ENCODE measurements at regions of chr2 and their contacts with region 1.

Region 1: DNA sequence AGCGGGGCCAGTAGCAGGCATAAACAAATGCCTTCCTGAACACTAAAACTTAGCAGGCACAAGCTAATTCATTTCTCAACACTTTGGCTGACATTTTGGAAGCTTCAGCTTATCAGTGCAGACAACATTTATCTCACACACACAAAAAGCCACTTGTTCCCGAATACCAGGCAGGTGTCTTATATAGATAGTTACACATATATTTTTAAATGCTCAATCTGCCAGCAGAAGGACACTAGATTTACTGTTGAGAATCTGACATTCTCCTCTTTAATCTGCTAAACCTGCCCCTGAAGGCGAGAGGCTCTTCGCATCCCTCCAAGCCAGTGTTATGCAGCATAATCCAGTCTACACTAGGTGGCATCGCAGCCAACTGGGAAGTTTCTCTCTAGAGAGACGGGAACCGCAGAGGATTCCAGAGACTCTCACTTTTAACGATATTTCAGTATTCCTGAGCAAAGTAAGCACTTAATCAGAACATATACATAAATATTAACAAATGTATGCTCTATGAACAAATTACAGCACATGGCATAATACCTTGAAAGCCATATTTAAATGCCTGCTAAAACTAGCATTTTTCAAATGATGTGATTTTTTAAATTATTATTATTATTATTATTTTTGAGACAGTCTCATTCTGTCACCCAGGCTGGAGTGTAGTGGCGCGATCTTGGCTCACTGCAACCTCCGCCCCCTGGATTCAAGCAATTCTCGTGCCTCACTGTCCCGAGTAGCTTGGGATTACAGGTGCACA is 90.2 kb upstream of the SCG2 start:
- DNase-seq: peak; percentile 67
- ATAC-seq: peak; percentile 92
- H3K4me3 ChIP-seq: no peak overlapping the region
- H3K27ac ChIP-seq: no peak overlapping the region
- H3K4me1 ChIP-seq: peaks cover 6% of the 10 kb centered on the region
- H3K27me3 ChIP-seq: no peaks in the 10 kb centered on the region
- CTCF ChIP-seq: peak; percentile 80
- POLR2A ChIP-seq: no peak
- RAD21 ChIP-seq: peak; percentile 81

Region 2: GRCh38 chr2:223860809-223861738 is 168.7 kb after region 1 on chr2:
- CTCF ChIA-PET with region 1: no interaction called
- POLR2A ChIA-PET with region 1: no interaction called
- dilution Hi-C with region 1: no loop called
- in situ Hi-C with region 1: no loop called
- intact Hi-C with region 1: loop called (anchors 5 kb)
- DNase-seq: peak; percentile 77
- ATAC-seq: peak; percentile 87
- H3K4me3 ChIP-seq: no peak overlapping the region
- H3K27ac ChIP-seq: peak overlapping the region; percentile 57; the same call in 1 of the 2 replicates
- H3K4me1 ChIP-seq: peaks cover 8% of the 10 kb centered on the region
- H3K27me3 ChIP-seq: no peaks in the 10 kb centered on the region
- CTCF ChIP-seq: no peak
- POLR2A ChIP-seq: no peak
- RAD21 ChIP-seq: no peak

Region 3: DNA sequence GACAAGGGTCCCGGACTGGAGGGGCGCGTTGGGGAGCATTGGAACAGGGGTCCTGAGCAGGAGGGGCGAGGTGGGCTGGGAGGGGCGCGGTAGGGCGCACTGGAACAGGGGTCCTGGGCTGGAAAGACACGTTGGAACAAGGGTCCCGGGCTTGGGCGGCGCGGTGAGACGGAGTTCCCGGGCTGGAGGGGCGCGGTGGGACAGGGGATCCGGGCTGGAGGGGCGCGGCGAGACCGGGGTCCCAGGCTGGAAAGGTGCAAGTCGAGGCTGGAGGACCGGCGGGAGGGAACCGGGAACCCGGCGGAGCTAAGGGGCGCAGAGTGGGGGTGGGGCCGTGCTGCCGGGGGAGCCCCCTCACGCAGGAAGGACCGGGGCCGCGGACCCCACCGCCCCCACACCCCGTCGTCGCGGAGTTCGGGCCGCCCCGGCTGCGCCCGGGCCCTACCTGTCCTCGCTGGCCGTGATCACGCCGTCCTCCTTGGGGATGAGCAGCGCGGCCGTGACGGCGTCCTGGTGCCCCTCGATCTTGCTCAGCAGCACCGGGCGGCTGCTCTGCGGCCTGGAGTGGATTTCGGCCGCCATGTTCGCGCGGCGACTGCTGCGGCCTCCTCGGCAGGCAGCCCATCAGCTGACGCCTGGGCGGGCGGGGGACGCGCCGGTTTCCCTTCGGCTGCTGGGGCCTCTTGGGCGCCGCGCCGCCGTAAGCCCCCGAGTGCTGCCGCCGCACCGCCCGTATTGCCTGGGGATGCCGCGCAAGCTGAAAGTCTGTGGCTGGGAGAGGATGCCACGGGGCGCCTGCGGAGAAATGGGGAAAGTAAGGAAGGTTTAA is 252.5 kb after region 1 on chr2 and contains the start of gene WDFY1:
- CTCF ChIA-PET with region 1: no interaction called
- POLR2A ChIA-PET with region 1: no interaction called
- dilution Hi-C with region 1: no loop called
- in situ Hi-C with region 1: no loop called
- intact Hi-C with region 1: loop called (anchors 10 kb)
- DNase-seq: peak; percentile 86
- ATAC-seq: peak; percentile 87
- H3K4me3 ChIP-seq: peak within 1 kb of the TSS; percentile 91
- H3K27ac ChIP-seq: peak within 1 kb of the TSS; percentile 98
- H3K4me1 ChIP-seq: peaks cover 9% of the 10 kb centered on the region
- H3K27me3 ChIP-seq: no peaks in the 10 kb centered on the region
- CTCF ChIP-seq: no peak
- POLR2A ChIP-seq: peak; percentile 87
- RAD21 ChIP-seq: peak; percentile 33
- total RNA-seq, gene WDFY1: 93.6 and 115 TPM in 2 replicates

Measured in IMR-90 (cell line).